ENCODE measurements at regions of chr16 and their contacts with region 1.

Region 1: GRCh38 chr16:7449808-7450207 is 117.2 kb downstream of the RBFOX1 start:
- DNase-seq: no peak
- H3K4me3 ChIP-seq: no peak overlapping the region
- H3K27ac ChIP-seq: no peak overlapping the region
- H3K4me1 ChIP-seq: no peaks in the 10 kb centered on the region
- H3K27me3 ChIP-seq: no peaks in the 10 kb centered on the region
- CTCF ChIP-seq: no peak
- POLR2A ChIP-seq: no peak

Region 2: DNA sequence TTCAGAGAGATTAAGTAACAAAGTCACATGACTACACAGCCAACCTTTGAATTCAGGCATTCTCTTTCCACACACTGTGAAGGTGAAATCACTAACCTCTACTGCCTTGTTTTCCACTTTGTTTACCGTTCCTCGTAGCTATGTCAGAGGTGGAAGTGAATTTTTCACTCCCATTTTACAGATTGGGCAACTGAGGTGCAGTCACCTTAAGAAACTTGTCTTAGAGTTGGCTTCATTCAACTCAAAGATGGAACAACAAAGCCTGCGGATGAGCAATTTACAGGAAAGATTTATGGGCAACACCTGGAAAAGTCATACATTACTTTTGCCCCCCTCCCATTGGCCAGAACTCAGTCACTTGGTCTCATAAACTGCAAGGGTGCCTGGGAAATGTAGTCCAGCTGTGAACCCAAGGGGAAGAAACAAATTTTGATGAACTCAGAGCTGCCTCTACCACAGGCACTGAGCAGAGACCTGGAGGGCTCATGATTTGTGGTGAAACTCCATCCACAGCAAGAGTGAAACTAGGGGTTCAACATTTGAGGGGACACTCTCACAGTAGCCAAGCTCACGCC is 1567.6 kb before region 1 on chr16:
- CTCF ChIA-PET with region 1: no interaction called
- POLR2A ChIA-PET with region 1: interaction called, 15 read pairs
- dilution Hi-C with region 1: no loop called
- intact Hi-C with region 1: no loop called
- DNase-seq: no peak
- H3K4me3 ChIP-seq: no peak overlapping the region
- H3K27ac ChIP-seq: no peak overlapping the region
- H3K4me1 ChIP-seq: no peaks in the 10 kb centered on the region
- H3K27me3 ChIP-seq: no peaks in the 10 kb centered on the region
- CTCF ChIP-seq: no peak
- POLR2A ChIP-seq: no peak

Region 3: GRCh38 chr16:7584561-7584960 is 134.8 kb after region 1 on chr16:
- CTCF ChIA-PET with region 1: no interaction called
- POLR2A ChIA-PET with region 1: no interaction called
- dilution Hi-C with region 1: no loop called
- intact Hi-C with region 1: no loop called
- DNase-seq: no peak
- H3K4me3 ChIP-seq: no peak overlapping the region
- H3K27ac ChIP-seq: no peak overlapping the region
- H3K4me1 ChIP-seq: no peaks in the 10 kb centered on the region
- H3K27me3 ChIP-seq: no peaks in the 10 kb centered on the region
- CTCF ChIP-seq: no peak
- POLR2A ChIP-seq: no peak

Measured in endothelial cell of umbilical vein (primary cell).